B cell (primary cell): ENCODE measurements at regions of chr5 and their contacts with region 1.

Region 1: DNA sequence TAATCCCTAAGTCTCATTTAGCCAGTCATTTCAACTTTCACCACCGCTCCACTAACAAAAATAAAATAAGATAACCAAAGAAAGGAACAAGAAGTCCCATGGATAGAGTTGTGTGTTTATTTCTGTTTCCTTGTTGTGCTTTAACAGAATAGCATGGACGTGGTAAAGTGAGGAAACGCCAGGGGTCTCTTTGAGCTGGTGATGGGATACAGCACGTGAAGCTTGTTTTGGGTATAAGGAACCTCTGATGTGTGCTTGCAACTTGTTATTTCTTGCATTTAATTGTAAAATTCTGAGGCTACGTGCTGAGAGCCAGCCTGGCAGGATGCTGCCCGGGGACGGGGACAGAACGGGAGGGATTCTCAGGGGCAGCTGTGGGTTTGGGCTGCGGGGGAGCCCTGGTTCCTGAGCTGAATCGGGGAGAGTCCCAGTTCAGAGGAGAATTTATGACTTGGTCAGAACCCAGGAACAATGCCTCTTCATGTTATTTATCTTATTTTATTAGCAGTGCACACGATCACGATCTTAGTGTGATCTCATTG is 63.4 kb downstream of the ANKRD33B start:
- DNase-seq: no peak
- ATAC-seq: no peak
- H3K4me3 ChIP-seq: peak overlapping the region; percentile 9 to 64 (median 46)
- H3K4me3 Mint-ChIP-seq: peak overlapping the region; percentile 79
- H3K27ac ChIP-seq: no peak overlapping the region
- H3K27ac Mint-ChIP-seq: peak overlapping the region; percentile 22
- H3K4me1 ChIP-seq: peaks cover 30 to 39% of the 10 kb centered on the region in 2 donors
- H3K4me1 Mint-ChIP-seq: peaks cover 57% of the 10 kb centered on the region
- H3K27me3 ChIP-seq: no peaks in the 10 kb centered on the region
- H3K27me3 Mint-ChIP-seq: no peaks in the 10 kb centered on the region
- CTCF ChIP-seq: no peak

Region 2: GRCh38 chr5:9691261-9691660 is 936.0 kb before region 1 on chr5:
- CTCF ChIA-PET with region 1: no interaction called
- POLR2A ChIA-PET with region 1: no interaction called
- intact Hi-C with region 1: no loop called
- DNase-seq: no peak
- ATAC-seq: no peak
- H3K4me3 ChIP-seq: no peak overlapping the region
- H3K4me3 Mint-ChIP-seq: no peak overlapping the region
- H3K27ac ChIP-seq: no peak overlapping the region
- H3K27ac Mint-ChIP-seq: no peak overlapping the region
- H3K4me1 ChIP-seq: no peaks in the 10 kb centered on the region
- H3K4me1 Mint-ChIP-seq: no peaks in the 10 kb centered on the region
- H3K27me3 ChIP-seq: no peaks in the 10 kb centered on the region
- H3K27me3 Mint-ChIP-seq: no peaks in the 10 kb centered on the region
- CTCF ChIP-seq: no peak

Region 3: DNA sequence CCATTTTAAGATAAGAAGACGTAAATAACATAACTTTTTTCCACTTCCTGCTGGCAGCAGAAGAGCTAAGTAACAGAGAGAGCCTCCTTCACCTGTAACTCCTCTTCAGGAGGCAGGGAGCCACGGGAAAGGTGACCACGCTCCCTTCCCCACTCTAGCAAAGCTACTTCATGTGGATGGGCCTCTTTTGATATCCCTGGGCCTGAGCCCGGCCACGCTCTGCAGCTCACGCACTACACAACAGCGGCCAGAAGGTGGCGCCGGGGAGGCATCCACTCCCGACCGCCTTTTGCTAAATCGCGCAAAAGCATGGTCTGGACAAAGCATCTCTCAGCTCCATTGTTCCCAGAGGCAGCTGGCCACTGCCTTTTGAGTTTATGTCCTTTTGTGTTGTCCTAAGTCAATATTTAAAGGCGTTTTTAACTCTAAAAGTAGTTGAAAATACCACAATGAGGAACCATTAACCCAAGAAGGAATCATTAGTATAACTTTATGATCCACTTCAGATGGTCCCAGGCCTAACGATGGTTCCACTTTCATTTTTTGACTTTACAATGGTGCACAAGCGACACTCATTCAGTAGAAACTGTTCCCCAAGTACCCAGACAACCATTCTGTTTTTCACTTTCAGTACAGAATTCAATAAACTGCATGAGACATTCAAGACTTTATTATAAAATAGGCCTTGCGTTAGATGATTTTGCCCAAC is 343.1 kb before region 1 on chr5:
- CTCF ChIA-PET with region 1: interaction called, 15 read pairs
- POLR2A ChIA-PET with region 1: no interaction called
- intact Hi-C with region 1: loop called (anchors 1 kb)
- DNase-seq: peak; percentile 81
- ATAC-seq: peak; percentile 97
- H3K4me3 ChIP-seq: no peak overlapping the region
- H3K4me3 Mint-ChIP-seq: no peak overlapping the region
- H3K27ac ChIP-seq: no peak overlapping the region
- H3K27ac Mint-ChIP-seq: no peak overlapping the region
- H3K4me1 ChIP-seq: peaks cover 4 to 15% of the 10 kb centered on the region in 2 donors
- H3K4me1 Mint-ChIP-seq: peaks cover 12% of the 10 kb centered on the region
- H3K27me3 ChIP-seq: peaks cover 0 to 3% (median 0%) of the 10 kb centered on the region in 4 experiments
- H3K27me3 Mint-ChIP-seq: peaks cover 12% of the 10 kb centered on the region
- CTCF ChIP-seq: peak; percentile 98

Region 4: DNA sequence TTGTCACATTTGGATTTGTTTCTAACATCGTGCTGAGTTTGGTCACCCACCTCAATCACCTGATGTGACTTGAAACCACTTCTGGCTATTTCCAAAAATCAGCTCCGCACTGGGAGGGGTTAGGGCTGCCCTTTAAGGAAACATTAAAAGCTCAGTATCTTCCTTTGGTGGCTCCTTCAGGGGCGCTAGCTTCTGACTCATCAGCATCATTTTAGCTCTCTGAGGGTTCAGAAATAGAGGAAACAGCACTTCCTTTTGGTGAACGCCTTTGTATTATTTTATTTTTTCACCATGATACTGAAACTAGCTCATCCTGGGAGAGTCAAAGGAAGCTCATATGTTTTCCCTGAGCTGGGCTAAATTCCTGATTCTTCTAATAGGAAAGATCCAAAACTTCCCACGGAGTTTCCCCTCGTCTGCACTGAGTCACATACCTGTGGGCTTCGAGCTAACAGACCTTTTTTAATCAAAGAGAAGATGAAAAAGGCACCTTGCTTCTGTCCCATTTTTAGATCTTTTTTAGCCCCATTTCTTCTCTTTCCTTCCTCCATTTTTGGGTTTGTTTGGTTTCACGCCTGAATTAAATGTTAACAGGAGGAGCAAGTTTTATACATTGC is 137.3 kb before region 1 on chr5:
- CTCF ChIA-PET with region 1: interaction called, 13 read pairs
- POLR2A ChIA-PET with region 1: no interaction called
- intact Hi-C with region 1: no loop called
- DNase-seq: peak; percentile 63
- ATAC-seq: peak; percentile 93
- H3K4me3 ChIP-seq: peak overlapping the region in 1 of 5 experiments; percentile 35
- H3K4me3 Mint-ChIP-seq: peak overlapping the region; percentile 72
- H3K27ac ChIP-seq: peak overlapping the region; percentile 4 to 8
- H3K27ac Mint-ChIP-seq: peak overlapping the region; percentile 71
- H3K4me1 ChIP-seq: peaks cover 25 to 39% of the 10 kb centered on the region in 2 donors
- H3K4me1 Mint-ChIP-seq: peaks cover 51% of the 10 kb centered on the region
- H3K27me3 ChIP-seq: no peaks in the 10 kb centered on the region
- H3K27me3 Mint-ChIP-seq: no peaks in the 10 kb centered on the region
- CTCF ChIP-seq: no peak

Region 5: DNA sequence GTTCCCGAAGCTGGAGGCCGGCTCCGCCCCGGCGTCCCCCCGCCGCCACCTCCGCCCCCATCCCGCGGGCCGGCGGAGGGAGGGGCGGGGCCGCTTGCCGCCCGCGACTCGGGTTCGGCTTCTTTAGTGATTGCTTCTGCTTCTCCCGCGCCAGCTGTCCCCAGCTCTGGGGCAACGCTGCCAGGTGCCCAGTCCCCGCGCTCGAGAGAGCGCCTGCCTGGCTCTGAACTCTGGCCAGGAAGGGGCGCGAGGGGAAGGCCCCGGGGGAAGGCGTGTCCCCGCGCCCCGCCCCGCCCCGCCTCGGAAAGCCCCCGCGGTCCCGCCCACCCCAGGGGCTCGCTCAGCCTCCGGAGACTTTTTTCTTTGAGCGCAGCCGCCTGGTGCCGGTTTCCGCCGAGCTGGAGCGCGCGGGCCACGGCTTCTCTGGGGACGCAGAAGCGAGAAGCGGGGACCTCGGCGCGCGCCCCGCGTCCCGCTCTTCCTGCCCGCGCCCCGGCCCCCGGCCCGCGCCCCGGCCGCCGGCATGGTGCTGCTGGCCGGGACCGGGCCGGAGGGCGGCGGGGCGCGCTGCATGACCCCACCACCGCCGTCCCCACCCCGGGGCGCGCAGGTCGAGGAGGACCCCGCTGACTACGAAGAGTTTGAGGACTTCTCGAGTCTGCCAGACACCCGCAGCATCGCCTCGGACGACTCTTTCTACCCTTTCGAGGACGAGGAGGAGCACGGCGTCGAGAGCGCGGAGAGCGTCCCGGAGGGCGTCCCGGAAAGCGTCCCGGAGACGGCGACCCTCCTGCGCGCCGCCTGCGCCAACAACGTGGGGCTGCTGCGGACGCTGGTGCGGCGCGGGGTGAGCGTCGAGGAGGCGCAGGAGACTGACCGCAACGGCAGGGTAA is 63.0 kb before region 1 on chr5 and contains the start of gene ANKRD33B:
- CTCF ChIA-PET with region 1: interaction called, 27 read pairs
- POLR2A ChIA-PET with region 1: interaction called, 4 read pairs
- intact Hi-C with region 1: loop called (anchors 1 kb)
- DNase-seq: peak; percentile 91
- ATAC-seq: peak; percentile 74
- H3K4me3 ChIP-seq: peak within 1 kb of the TSS; percentile 64 to 84 (median 75)
- H3K4me3 Mint-ChIP-seq: peak within 1 kb of the TSS; percentile 93
- H3K27ac ChIP-seq: peak within 1 kb of the TSS; percentile 76 to 96
- H3K27ac Mint-ChIP-seq: peak within 1 kb of the TSS; percentile 90
- H3K4me1 ChIP-seq: peaks cover 42 to 51% of the 10 kb centered on the region in 2 donors
- H3K4me1 Mint-ChIP-seq: peaks cover 61% of the 10 kb centered on the region
- H3K27me3 ChIP-seq: no peaks in the 10 kb centered on the region
- H3K27me3 Mint-ChIP-seq: no peaks in the 10 kb centered on the region
- CTCF ChIP-seq: no peak
- total RNA-seq, gene ANKRD33B: 23.4 and 24.8 TPM in 2 replicates

Region 6: DNA sequence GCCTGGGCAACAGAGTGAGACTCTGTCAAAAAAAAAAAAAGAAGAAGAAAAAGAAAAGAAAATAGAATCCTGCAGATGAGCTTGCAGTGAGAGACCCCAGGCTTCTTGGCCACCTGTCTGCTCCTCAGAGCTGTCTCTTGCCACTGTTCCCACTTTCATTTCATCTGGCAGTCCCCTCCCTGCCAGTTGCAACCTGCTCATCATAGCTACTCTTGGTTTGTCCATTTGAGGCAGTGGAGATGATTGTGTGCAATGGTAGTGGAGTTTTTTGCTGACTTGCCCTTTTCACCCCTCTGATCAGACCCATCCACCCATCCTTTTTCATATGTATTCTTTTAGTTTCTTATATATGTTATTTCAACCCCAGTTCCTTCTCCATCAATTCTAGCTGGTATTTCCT is 34.6 kb before region 1 on chr5:
- CTCF ChIA-PET with region 1: interaction called, 11 read pairs
- POLR2A ChIA-PET with region 1: no interaction called
- intact Hi-C with region 1: no loop called
- DNase-seq: no peak
- ATAC-seq: no peak
- H3K4me3 ChIP-seq: no peak overlapping the region
- H3K4me3 Mint-ChIP-seq: no peak overlapping the region
- H3K27ac ChIP-seq: no peak overlapping the region
- H3K27ac Mint-ChIP-seq: no peak overlapping the region
- H3K4me1 ChIP-seq: peaks cover 18 to 20% of the 10 kb centered on the region in 2 donors
- H3K4me1 Mint-ChIP-seq: peaks cover 70% of the 10 kb centered on the region
- H3K27me3 ChIP-seq: no peaks in the 10 kb centered on the region
- H3K27me3 Mint-ChIP-seq: no peaks in the 10 kb centered on the region
- CTCF ChIP-seq: no peak

Region 7: GRCh38 chr5:10695055-10695649 is 67.9 kb after region 1 on chr5:
- CTCF ChIA-PET with region 1: interaction called, 20 read pairs
- POLR2A ChIA-PET with region 1: no interaction called
- intact Hi-C with region 1: loop called (anchors 1 kb)
- DNase-seq: peak; percentile 59
- ATAC-seq: peak; percentile 26
- H3K4me3 ChIP-seq: no peak overlapping the region
- H3K4me3 Mint-ChIP-seq: no peak overlapping the region
- H3K27ac ChIP-seq: no peak overlapping the region
- H3K27ac Mint-ChIP-seq: peak overlapping the region; percentile 21
- H3K4me1 ChIP-seq: peaks cover 7 to 21% of the 10 kb centered on the region in 2 donors
- H3K4me1 Mint-ChIP-seq: peaks cover 23% of the 10 kb centered on the region
- H3K27me3 ChIP-seq: no peaks in the 10 kb centered on the region
- H3K27me3 Mint-ChIP-seq: no peaks in the 10 kb centered on the region
- CTCF ChIP-seq: peak; percentile 71